ENCODE measurements at regions of chr12 and their contacts with region 1.

Region 1: GRCh38 chr12:76455582-76456345 is 103.8 kb downstream of the OSBPL8 start:
- DNase-seq: peak; percentile 89
- H3K4me3 ChIP-seq: no peak overlapping the region
- H3K27ac ChIP-seq: peak overlapping the region; percentile 97
- H3K4me1 ChIP-seq: peaks cover 27% of the 10 kb centered on the region
- H3K27me3 ChIP-seq: no peaks in the 10 kb centered on the region
- CTCF ChIP-seq: peak; percentile 70 to 73

Region 2: GRCh38 chr12:75526655-75527511 is 928.9 kb before region 1 on chr12:
- CTCF ChIA-PET with region 1: interaction called, 7 read pairs
- dilution Hi-C with region 1: no loop called
- in situ Hi-C with region 1: no loop called
- intact Hi-C with region 1: loop called (anchors 5 kb)
- DNase-seq: peak; percentile 34
- H3K4me3 ChIP-seq: no peak overlapping the region
- H3K27ac ChIP-seq: no peak overlapping the region
- H3K4me1 ChIP-seq: no peaks in the 10 kb centered on the region
- H3K27me3 ChIP-seq: no peaks in the 10 kb centered on the region
- CTCF ChIP-seq: peak; percentile 47 to 69

Region 3: DNA sequence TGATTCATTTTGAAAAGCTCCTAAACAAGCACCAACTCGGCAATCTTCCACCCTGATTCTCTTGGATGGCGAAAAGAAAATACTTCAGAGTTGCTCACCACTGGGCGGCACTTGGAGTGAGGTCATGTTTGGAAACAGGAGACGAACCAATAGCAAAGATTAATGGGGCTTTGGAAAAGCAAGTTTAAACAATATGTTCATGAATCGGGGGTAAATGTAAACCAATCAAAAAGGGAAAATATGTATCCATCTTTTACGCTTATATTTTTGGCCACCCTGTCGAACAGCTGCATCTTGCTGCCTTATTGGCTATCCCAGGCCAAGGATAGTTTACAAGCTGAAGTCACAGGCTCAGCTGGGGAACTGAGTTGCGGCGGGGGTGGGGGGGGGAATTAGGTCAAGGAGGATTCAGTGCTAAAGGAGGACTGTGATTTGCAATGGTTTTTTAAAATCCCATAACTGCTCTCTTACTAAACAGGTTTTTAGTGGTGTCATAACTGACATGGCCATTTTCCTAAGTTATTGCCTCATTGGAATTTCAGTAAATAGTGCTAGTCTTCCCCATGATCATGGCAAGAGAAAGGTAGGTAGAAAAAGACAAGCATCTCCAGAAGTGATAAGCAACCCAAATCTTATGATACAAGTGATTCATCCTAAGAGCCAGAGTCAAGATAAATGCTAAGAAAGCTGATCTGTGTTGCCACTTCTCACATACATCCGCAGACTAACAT is 634.8 kb before region 1 on chr12:
- CTCF ChIA-PET with region 1: no interaction called
- dilution Hi-C with region 1: no loop called
- in situ Hi-C with region 1: no loop called
- intact Hi-C with region 1: loop called (anchors 10 kb)
- DNase-seq: peak; percentile 79
- H3K4me3 ChIP-seq: no peak overlapping the region
- H3K27ac ChIP-seq: peak overlapping the region; percentile 44
- H3K4me1 ChIP-seq: peaks cover 52% of the 10 kb centered on the region
- H3K27me3 ChIP-seq: no peaks in the 10 kb centered on the region
- CTCF ChIP-seq: peak in 1 of 2 donors; percentile 40

Region 4: GRCh38 chr12:76083904-76084862 is 371.6 kb before region 1 on chr12 and contains the start of gene NAP1L1:
- CTCF ChIA-PET with region 1: no interaction called
- dilution Hi-C with region 1: no loop called
- in situ Hi-C with region 1: no loop called
- intact Hi-C with region 1: loop called (anchors 2 kb)
- DNase-seq: peak; percentile 97
- H3K4me3 ChIP-seq: peak within 1 kb of the TSS; percentile 82 to 98 (median 95)
- H3K27ac ChIP-seq: peak within 1 kb of the TSS; percentile 96
- H3K4me1 ChIP-seq: peaks cover 14% of the 10 kb centered on the region
- H3K27me3 ChIP-seq: no peaks in the 10 kb centered on the region
- CTCF ChIP-seq: no peak
- total RNA-seq, gene NAP1L1: 167 to 381 TPM

Region 5: DNA sequence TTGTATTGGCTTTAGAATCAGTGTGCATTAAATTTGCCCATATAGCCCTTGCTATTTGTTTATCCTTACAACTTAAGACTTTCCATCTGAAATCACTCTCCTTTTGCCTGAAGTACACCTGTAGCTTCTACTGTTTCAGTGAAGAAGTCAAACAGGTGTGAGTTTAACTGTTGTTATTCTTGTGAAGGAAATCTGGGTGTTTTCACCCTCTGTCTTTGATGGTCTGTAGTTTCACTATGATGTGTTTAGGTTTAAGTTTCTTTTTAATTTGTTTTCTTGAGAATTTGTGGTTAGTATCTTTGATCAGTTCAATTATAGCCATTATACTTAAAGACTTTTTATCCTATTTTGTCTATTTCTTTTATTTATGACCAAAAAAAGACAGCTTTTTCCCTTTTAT is 38.6 kb before region 1 on chr12:
- CTCF ChIA-PET with region 1: no interaction called
- dilution Hi-C with region 1: no loop called
- in situ Hi-C with region 1: no loop called
- intact Hi-C with region 1: no loop called
- DNase-seq: no peak
- H3K4me3 ChIP-seq: no peak overlapping the region
- H3K27ac ChIP-seq: no peak overlapping the region
- H3K4me1 ChIP-seq: peaks cover 11% of the 10 kb centered on the region
- H3K27me3 ChIP-seq: no peaks in the 10 kb centered on the region
- CTCF ChIP-seq: no peak

Region 6: DNA sequence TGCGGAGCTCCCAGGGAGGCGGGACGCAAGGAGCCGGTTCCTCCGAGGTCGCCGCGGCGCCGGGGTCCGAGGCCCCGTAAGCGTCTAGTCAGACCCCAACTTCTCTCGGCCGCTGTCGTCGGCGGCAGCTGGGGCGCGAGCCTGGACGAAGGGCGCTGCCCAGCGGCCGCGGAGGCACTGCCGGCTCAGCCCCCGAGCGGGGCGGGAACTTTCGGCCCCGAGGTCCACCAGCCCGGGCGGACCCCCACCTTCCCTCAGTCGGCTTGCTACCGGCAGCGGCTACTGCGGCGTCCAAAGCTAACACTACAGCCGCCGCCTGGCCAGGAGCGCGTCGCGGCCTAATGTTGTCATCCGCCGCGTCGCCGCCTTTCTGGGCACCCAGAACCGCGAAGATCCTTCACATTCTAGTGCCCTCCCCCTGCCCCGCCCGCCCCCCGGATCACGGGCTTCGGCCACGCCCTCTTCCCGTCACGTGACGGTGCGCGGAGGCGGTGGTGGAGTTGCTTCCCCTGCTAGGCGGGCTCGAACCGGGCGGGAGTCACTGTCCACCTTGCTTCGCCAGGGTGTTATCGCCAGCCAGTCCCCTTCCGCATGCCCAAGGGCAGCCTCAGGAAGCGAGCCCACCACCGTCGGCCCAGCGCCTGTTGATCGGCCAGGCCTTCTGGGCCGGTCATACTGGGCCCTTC is 103.8 kb after region 1 on chr12 and contains the start of gene OSBPL8:
- CTCF ChIA-PET with region 1: no interaction called
- dilution Hi-C with region 1: no loop called
- in situ Hi-C with region 1: no loop called
- intact Hi-C with region 1: loop called (anchors 5 kb)
- DNase-seq: peak; percentile 92
- H3K4me3 ChIP-seq: peak within 1 kb of the TSS; percentile 70 to 74 (median 74)
- H3K27ac ChIP-seq: peak within 1 kb of the TSS; percentile 89
- H3K4me1 ChIP-seq: peaks cover 5% of the 10 kb centered on the region
- H3K27me3 ChIP-seq: no peaks in the 10 kb centered on the region
- CTCF ChIP-seq: peak in 1 of 2 donors; percentile 31
- total RNA-seq, gene OSBPL8: 87.4 to 88.4 TPM